B cell (primary cell): ENCODE measurements at regions of chr5 and their contacts with region 1.

Region 1: GRCh38 chr5:1385395-1386273 is 40.7 kb upstream of the CLPTM1L start:
- DNase-seq: peak; percentile 88
- ATAC-seq: peak; percentile 91
- H3K4me3 ChIP-seq: peak overlapping the region; percentile 22 to 78 (median 62)
- H3K4me3 Mint-ChIP-seq: peak overlapping the region; percentile 96
- H3K27ac ChIP-seq: peak overlapping the region; percentile 83 to 92
- H3K27ac Mint-ChIP-seq: peak overlapping the region; percentile 100
- H3K4me1 ChIP-seq: peaks cover 15 to 21% of the 10 kb centered on the region in 2 donors
- H3K4me1 Mint-ChIP-seq: peaks cover 30% of the 10 kb centered on the region
- H3K27me3 ChIP-seq: peaks cover 0 to 3% (median 0%) of the 10 kb centered on the region in 4 experiments
- H3K27me3 Mint-ChIP-seq: peaks cover 13% of the 10 kb centered on the region
- CTCF ChIP-seq: no peak

Region 2: GRCh38 chr5:56574-57290 is 1328.9 kb before region 1 on chr5:
- CTCF ChIA-PET with region 1: no interaction called
- POLR2A ChIA-PET with region 1: no interaction called
- intact Hi-C with region 1: no loop called
- DNase-seq: no peak
- ATAC-seq: no peak
- H3K4me3 ChIP-seq: no peak overlapping the region
- H3K4me3 Mint-ChIP-seq: no peak overlapping the region
- H3K27ac ChIP-seq: no peak overlapping the region
- H3K27ac Mint-ChIP-seq: no peak overlapping the region
- H3K4me1 ChIP-seq: peaks cover 4% of the 10 kb centered on the region in 2 donors
- H3K4me1 Mint-ChIP-seq: peaks cover 2% of the 10 kb centered on the region
- H3K27me3 ChIP-seq: peaks cover 0 to 33% (median 11%) of the 10 kb centered on the region in 4 experiments
- H3K27me3 Mint-ChIP-seq: peaks cover 25% of the 10 kb centered on the region
- CTCF ChIP-seq: no peak

Region 3: DNA sequence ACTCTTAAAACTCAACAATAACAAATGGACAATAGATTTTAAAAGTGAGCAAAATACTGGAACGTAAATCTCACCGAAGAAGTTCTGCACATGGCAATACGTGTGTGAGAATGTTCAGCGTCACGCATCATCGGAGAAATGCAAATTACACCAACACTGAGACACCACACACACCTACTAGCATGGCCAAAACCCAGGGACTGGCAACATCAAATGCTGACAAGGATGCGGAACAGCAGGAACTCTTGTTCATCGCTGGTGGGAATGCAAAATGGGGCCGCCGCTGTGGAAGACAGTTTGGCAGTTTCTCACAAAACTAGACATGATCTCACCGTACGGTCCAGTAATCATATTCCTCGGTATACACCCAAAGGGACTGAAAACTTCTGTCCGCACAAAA is 19.1 kb before region 1 on chr5:
- CTCF ChIA-PET with region 1: interaction called, 38 read pairs
- POLR2A ChIA-PET with region 1: interaction called, 16 read pairs
- intact Hi-C with region 1: loop called (anchors 1 kb)
- DNase-seq: peak; percentile 77
- ATAC-seq: peak; percentile 85
- H3K4me3 ChIP-seq: peak overlapping the region in 1 of 5 experiments; percentile 22
- H3K4me3 Mint-ChIP-seq: peak overlapping the region; percentile 75
- H3K27ac ChIP-seq: no peak overlapping the region
- H3K27ac Mint-ChIP-seq: peak overlapping the region; percentile 80
- H3K4me1 ChIP-seq: peaks cover 35 to 41% of the 10 kb centered on the region in 2 donors
- H3K4me1 Mint-ChIP-seq: peaks cover 42% of the 10 kb centered on the region
- H3K27me3 ChIP-seq: peaks cover 0 to 16% (median 5%) of the 10 kb centered on the region in 4 experiments
- H3K27me3 Mint-ChIP-seq: peaks cover 11% of the 10 kb centered on the region
- CTCF ChIP-seq: no peak

Region 4: GRCh38 chr5:1374680-1375055 is 11.0 kb before region 1 on chr5:
- CTCF ChIA-PET with region 1: interaction called, 38 read pairs
- POLR2A ChIA-PET with region 1: interaction called, 16 read pairs
- intact Hi-C with region 1: no loop called
- DNase-seq: no peak
- ATAC-seq: no peak
- H3K4me3 ChIP-seq: no peak overlapping the region
- H3K4me3 Mint-ChIP-seq: no peak overlapping the region
- H3K27ac ChIP-seq: no peak overlapping the region
- H3K27ac Mint-ChIP-seq: peak overlapping the region; percentile 59
- H3K4me1 ChIP-seq: peaks cover 28 to 38% of the 10 kb centered on the region in 2 donors
- H3K4me1 Mint-ChIP-seq: peaks cover 40% of the 10 kb centered on the region
- H3K27me3 ChIP-seq: no peaks in the 10 kb centered on the region
- H3K27me3 Mint-ChIP-seq: no peaks in the 10 kb centered on the region
- CTCF ChIP-seq: no peak

Region 5: GRCh38 chr5:1594357-1595106 is 208.9 kb after region 1 on chr5:
- CTCF ChIA-PET with region 1: interaction called, 3 read pairs
- POLR2A ChIA-PET with region 1: no interaction called
- intact Hi-C with region 1: loop called (anchors 10 kb)
- DNase-seq: peak; percentile 92
- ATAC-seq: peak; percentile 93
- H3K4me3 ChIP-seq: peak overlapping the region; percentile 11 to 90 (median 78)
- H3K4me3 Mint-ChIP-seq: peak overlapping the region; percentile 86
- H3K27ac ChIP-seq: peak overlapping the region; percentile 68 to 72
- H3K27ac Mint-ChIP-seq: peak overlapping the region; percentile 85
- H3K4me1 ChIP-seq: peaks cover 0 to 12% of the 10 kb centered on the region in 2 donors
- H3K4me1 Mint-ChIP-seq: peaks cover 22% of the 10 kb centered on the region
- H3K27me3 ChIP-seq: no peaks in the 10 kb centered on the region
- H3K27me3 Mint-ChIP-seq: no peaks in the 10 kb centered on the region
- CTCF ChIP-seq: peak; percentile 57

Region 6: GRCh38 chr5:1799602-1800471 is 414.2 kb after region 1 on chr5 and contains the start of gene MRPL36:
- CTCF ChIA-PET with region 1: no interaction called
- POLR2A ChIA-PET with region 1: no interaction called
- intact Hi-C with region 1: loop called (anchors 5 kb)
- DNase-seq: peak; percentile 95
- ATAC-seq: peak; percentile 69
- H3K4me3 ChIP-seq: peak within 1 kb of the TSS; percentile 75 to 97 (median 92)
- H3K4me3 Mint-ChIP-seq: peak within 1 kb of the TSS; percentile 98
- H3K27ac ChIP-seq: peak within 1 kb of the TSS; percentile 52 to 90
- H3K27ac Mint-ChIP-seq: peak within 1 kb of the TSS; percentile 99
- H3K4me1 ChIP-seq: peaks cover 17 to 24% of the 10 kb centered on the region in 2 donors
- H3K4me1 Mint-ChIP-seq: peaks cover 59% of the 10 kb centered on the region
- H3K27me3 ChIP-seq: no peaks in the 10 kb centered on the region
- H3K27me3 Mint-ChIP-seq: no peaks in the 10 kb centered on the region
- CTCF ChIP-seq: no peak
- total RNA-seq, gene MRPL36: 22.4 and 25.0 TPM in 2 replicates